Left ventricle myocardium superior (tissue), 1 donor: ENCODE measurements at regions of chr12 and their contacts with region 1.

Region 1: DNA sequence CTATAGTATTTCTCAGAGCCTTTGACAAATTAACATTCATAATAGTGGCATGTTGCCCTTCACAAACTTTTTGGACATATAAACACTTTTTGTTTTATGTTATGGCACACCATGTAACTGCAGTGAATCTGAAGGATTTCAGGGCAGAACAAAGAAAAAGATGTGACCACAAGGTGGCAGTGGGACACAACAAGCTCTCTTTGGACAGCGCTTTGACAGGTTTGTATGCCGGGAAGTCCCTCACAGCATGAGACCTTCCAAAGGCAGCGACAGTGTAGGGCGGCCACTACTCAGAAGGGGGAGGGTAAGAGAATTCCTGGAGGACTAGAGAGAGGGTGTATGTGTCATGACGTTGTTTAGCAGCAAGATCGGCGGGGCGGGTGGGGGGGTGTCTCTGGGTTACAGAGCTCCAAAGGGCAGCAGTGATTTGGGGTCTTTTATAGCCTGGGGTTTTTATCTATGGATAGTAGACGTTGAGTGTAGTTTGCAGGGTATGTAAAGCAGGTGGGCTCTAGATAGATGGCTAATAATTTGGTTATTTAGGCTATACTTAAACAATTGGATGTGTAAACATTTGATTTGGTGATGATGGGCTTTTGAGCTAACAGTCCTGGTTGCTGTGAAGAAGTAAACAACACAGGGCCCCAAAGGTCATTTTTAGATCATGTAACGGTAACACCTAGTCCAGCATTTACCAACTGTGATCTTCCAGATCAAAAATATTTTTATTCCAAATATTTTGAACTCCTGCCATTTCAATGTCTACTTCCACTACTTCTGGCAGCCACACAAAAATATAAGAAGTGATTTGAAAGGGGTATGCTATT is 22.9 kb downstream of the ETFBKMT start:
- DNase-seq: peak; percentile 37
- ATAC-seq: peak; percentile 74

Region 2: DNA sequence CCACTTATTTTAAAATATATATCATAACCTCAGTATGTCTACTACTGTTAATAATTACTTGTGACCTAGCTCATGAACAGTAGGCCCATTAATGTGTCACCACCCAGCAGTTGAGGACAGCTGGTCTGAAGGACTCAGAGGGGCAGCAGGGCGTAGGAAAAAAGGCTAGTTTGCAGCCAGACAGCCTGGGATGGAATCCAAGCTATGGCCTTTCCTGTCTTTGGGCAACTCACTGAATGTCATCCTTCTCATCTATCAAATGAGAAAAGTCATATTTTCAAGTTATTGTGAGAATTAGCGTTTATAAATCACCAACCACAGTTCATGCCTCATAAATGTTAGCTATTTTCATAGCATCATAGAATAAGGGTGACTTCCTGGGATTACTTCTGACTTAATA is 103.7 kb before region 1 on chr12:
- intact Hi-C with region 1: no loop called
- DNase-seq: no peak
- ATAC-seq: peak; percentile 73

Region 3: GRCh38 chr12:32062881-32063280 is 380.5 kb after region 1 on chr12:
- intact Hi-C with region 1: loop called (anchors 5 kb)
- DNase-seq: no peak
- ATAC-seq: no peak

Region 4: GRCh38 chr12:32312049-32312670 is 629.8 kb after region 1 on chr12:
- intact Hi-C with region 1: loop called (anchors 10 kb)
- DNase-seq: no peak
- ATAC-seq: no peak